ENCODE measurements at regions of chr11 and their contacts with region 1.

Region 1: DNA sequence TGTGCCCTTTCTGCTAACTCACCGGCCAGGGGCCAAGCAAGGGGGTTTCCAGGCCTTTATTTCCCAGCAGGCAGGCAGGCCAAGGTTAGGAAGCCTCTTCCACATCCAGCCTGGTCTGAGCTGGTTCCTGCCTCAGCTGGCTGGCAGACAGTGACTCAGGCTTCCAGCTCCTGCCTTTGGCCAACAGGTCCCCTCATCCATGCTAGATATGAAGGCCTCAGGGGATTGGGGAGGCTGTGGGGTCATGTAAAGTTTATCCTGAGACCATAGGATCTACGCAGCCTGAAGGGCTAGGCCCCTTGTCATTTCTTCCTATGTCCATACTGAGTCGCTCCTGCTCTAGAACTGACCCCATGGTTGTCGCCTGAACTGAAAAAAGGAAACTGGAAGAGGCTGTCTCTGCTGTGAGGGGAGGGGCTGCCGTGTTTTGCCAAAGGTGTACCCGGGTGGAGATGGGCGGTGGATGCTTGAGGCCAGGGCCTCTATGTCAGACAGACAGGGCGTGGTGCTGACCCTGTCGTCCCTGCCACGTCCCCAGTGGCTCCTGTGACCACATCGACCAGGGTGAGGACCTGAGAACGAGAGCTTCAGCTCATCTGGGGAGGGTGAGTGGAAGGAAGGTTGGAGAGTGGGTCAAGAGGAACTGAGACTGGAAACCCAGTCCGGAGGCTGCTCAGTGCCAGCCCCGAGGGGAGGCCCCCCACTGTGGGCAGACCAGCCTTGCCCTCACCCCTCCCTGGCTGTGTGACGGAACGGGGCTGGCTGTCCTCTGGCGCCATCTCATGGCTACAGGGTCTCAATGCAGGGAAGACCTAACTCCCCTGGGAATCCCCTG is 17.0 kb downstream of the P2RY6 start:
- DNase-seq: peak; percentile 67
- H3K4me3 ChIP-seq: no peak overlapping the region
- H3K27ac ChIP-seq: peak overlapping the region; percentile 29
- H3K4me1 ChIP-seq: peaks cover 5% of the 10 kb centered on the region
- H3K27me3 ChIP-seq: no peaks in the 10 kb centered on the region
- CTCF ChIP-seq: peak; percentile 76

Region 2: DNA sequence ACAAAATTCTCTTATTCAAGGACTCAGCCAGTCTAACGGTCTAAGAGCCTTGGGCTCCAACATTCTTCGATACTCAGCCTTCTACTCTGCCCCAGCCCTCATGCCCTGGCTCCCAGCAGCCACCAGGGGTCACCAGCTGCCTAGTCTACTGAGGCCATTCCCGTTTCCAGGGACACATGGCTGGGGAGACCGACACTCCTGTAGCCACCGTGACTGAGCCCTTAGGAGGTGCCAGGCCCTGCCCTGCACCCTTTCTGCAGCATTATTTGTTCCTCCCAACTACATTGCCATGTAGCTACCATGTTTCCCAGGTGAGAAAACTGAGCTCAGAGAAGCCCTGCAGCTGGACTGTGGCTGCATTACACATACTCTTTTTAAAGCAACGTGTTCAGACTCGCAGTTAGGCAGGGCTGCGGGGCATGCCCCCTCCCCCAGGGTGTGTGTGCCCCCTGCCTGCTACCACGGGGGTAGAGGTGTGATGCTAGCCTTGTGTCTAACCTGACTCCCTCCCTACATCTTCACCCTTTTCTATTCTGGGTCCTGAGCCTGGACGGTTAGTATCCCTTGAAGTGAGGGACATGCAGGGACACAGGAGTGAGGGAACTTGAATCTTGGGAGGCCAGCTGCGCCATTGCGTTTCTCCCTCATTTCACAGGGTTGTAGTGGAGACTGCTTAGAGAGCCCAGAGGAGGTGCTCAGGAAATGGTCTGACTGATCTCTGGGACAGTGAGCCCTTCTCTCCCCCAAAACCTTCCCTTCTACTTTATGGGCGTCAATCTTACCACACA is 457.4 kb before region 1 on chr11:
- intact Hi-C with region 1: loop called (anchors 5 kb)
- DNase-seq: peak; percentile 85
- H3K4me3 ChIP-seq: no peak overlapping the region
- H3K27ac ChIP-seq: no peak overlapping the region
- H3K4me1 ChIP-seq: peaks cover 4% of the 10 kb centered on the region
- H3K27me3 ChIP-seq: no peaks in the 10 kb centered on the region
- CTCF ChIP-seq: peak; percentile 92

Region 3: GRCh38 chr11:73184953-73185671 is 104.0 kb before region 1 on chr11:
- intact Hi-C with region 1: loop called (anchors 2 kb)
- DNase-seq: peak; percentile 82
- H3K4me3 ChIP-seq: no peak overlapping the region
- H3K27ac ChIP-seq: no peak overlapping the region
- H3K4me1 ChIP-seq: no peaks in the 10 kb centered on the region
- H3K27me3 ChIP-seq: no peaks in the 10 kb centered on the region
- CTCF ChIP-seq: peak; percentile 80

Region 4: GRCh38 chr11:73236854-73237253 is 52.2 kb before region 1 on chr11:
- intact Hi-C with region 1: loop called (anchors 10 kb)
- DNase-seq: peak; percentile 63
- H3K4me3 ChIP-seq: no peak overlapping the region
- H3K27ac ChIP-seq: no peak overlapping the region
- H3K4me1 ChIP-seq: no peaks in the 10 kb centered on the region
- H3K27me3 ChIP-seq: no peaks in the 10 kb centered on the region
- CTCF ChIP-seq: peak; percentile 56

Region 5: GRCh38 chr11:73469401-73469800 is 180.3 kb after region 1 on chr11:
- intact Hi-C with region 1: no loop called
- DNase-seq: no peak
- H3K4me3 ChIP-seq: no peak overlapping the region
- H3K27ac ChIP-seq: no peak overlapping the region
- H3K4me1 ChIP-seq: no peaks in the 10 kb centered on the region
- H3K27me3 ChIP-seq: no peaks in the 10 kb centered on the region
- CTCF ChIP-seq: no peak

Region 6: DNA sequence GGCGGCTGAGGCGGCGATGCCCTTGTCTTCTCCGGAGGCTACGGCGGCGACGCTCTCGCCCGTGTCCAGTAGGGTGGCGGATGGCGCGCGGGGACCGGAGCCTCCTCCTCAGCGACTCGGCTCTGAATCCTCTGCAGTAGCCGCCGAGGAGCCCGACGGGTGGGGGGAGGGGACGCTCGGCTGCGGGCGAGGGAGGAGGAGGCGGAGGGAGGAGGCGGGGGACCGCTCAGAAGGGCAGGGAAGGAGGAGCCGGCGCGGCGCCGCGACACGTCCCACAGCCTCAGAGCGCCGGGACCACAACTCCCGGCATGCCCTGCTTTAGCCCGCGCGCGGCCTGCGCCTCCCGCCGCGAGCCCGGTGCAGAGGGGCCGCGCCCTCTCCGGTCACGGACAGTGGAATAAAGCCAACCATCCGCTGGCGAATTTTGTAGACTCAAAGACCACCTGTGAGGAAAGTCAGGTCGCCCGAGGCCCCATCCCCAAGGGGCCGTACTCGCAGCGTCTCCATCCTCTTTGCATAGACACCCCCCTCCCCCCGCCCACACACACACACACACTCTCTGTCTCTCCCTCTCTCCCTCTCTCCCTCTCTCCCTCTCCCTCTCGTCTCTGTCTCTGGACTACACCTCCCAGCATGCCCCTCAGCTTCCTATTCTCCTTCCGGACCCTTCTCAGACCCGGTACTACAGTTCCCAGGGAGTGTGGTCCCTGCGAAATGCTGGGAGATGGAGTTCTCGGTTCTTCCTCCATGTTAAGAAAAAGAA is 309.0 kb after region 1 on chr11 and contains the start of gene FAM168A:
- intact Hi-C with region 1: no loop called
- DNase-seq: peak; percentile 94
- H3K4me3 ChIP-seq: peak within 1 kb of the TSS; percentile 79
- H3K27ac ChIP-seq: peak within 1 kb of the TSS; percentile 80
- H3K4me1 ChIP-seq: peaks cover 3% of the 10 kb centered on the region
- H3K27me3 ChIP-seq: no peaks in the 10 kb centered on the region
- CTCF ChIP-seq: no peak
- total RNA-seq, gene FAM168A: 16.9 to 21.6 TPM

Measured in colonic mucosa (tissue), 4 donors.